Left ventricle myocardium inferior (tissue), 1 donor: ENCODE measurements at regions of chr12 and their contacts with region 1.

Region 1: GRCh38 chr12:6285063-6285477 is 25.4 kb upstream of the PLEKHG6 start:
- DNase-seq: no peak
- H3K4me3 ChIP-seq: no peak overlapping the region
- H3K27ac ChIP-seq: no peak overlapping the region
- H3K4me1 ChIP-seq: peaks cover 13% of the 10 kb centered on the region
- H3K27me3 ChIP-seq: peaks cover 6% of the 10 kb centered on the region
- CTCF ChIP-seq: peak; percentile 95

Region 2: GRCh38 chr12:6167327-6168259 is 117.5 kb before region 1 on chr12:
- intact Hi-C with region 1: no loop called
- DNase-seq: no peak
- H3K4me3 ChIP-seq: no peak overlapping the region
- H3K27ac ChIP-seq: peak overlapping the region; percentile 72
- H3K4me1 ChIP-seq: peaks cover 29% of the 10 kb centered on the region
- H3K27me3 ChIP-seq: no peaks in the 10 kb centered on the region
- CTCF ChIP-seq: no peak

Region 3: DNA sequence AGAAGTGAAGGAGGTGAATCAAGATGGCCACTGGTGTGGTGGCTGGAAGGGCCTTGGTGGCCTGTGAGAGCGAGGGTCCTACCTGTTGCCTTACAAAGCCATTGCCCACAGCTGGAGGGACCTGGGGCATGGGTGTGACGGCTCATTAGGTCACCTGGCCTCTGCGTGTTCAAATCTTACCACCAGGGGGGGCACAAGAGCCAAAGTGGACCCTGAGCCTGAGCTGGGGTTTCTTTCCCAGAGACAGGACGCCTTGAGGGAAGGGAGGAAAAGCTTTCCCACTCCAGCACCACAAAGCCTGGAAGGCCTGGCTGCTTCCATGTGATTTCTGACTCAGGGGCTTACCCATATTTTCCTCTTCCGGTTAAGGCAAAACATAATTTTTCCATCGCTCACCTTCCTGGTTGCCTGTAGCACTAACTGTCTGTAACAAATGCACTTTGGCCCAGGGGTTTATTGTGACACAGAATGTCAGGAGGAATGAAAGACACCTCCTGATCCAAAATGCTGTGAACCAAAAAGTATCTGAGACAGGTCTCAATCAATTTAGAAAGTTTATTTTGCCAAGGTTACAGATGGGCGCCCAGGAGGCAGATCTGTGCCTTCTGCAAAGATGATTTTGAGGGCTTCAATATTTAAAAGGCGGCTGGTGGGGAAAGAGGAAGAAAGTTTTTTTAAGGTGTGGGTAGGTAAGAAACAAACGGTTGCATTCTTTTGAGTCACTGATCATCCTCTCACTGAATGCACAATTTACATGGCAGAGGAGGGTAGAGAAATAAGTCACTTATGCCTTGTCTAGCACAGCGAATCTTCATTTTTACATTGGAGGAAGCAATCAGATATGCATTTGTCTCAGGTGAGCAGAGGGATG is 89.2 kb before region 1 on chr12:
- intact Hi-C with region 1: loop called (anchors 2 kb)
- DNase-seq: peak; percentile 84
- H3K4me3 ChIP-seq: no peak overlapping the region
- H3K27ac ChIP-seq: peak overlapping the region; percentile 67
- H3K4me1 ChIP-seq: peaks cover 28% of the 10 kb centered on the region
- H3K27me3 ChIP-seq: peaks cover 13% of the 10 kb centered on the region
- CTCF ChIP-seq: peak; percentile 95

Region 4: DNA sequence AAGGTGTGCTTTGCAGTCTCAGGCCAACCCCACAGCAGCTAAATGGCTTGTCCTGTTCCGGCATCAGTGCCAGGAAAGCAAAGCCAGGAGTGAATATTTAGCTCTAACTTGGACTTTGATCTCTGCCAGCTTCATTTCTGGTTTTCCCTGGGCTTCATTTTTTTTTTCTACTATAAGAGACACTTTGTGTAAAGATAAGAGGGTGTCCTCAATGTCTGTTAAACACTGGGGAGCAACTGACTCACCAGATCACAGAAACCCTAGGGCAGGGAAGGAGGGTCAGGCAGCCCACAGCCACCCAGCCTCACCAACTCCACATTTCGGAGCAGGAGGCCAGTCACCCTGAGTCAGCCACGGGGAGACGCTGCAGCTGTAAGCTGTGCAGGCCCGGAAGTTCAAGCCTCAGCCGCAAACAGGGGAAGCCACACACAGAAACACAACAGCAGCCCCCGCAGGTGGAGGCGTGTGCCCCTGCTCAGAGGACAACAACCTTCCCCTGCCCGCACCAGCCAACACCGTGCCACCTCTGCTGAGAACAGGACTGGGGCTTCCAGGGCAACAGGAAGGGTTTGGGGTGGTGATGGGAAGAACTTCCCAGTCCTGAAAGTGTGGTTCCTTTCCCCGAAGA is 50.5 kb after region 1 on chr12:
- intact Hi-C with region 1: no loop called
- DNase-seq: peak; percentile 72
- H3K4me3 ChIP-seq: peak overlapping the region; percentile 90
- H3K27ac ChIP-seq: peak overlapping the region; percentile 99
- H3K4me1 ChIP-seq: peaks cover 88% of the 10 kb centered on the region
- H3K27me3 ChIP-seq: no peaks in the 10 kb centered on the region
- CTCF ChIP-seq: peak; percentile 53

Region 5: DNA sequence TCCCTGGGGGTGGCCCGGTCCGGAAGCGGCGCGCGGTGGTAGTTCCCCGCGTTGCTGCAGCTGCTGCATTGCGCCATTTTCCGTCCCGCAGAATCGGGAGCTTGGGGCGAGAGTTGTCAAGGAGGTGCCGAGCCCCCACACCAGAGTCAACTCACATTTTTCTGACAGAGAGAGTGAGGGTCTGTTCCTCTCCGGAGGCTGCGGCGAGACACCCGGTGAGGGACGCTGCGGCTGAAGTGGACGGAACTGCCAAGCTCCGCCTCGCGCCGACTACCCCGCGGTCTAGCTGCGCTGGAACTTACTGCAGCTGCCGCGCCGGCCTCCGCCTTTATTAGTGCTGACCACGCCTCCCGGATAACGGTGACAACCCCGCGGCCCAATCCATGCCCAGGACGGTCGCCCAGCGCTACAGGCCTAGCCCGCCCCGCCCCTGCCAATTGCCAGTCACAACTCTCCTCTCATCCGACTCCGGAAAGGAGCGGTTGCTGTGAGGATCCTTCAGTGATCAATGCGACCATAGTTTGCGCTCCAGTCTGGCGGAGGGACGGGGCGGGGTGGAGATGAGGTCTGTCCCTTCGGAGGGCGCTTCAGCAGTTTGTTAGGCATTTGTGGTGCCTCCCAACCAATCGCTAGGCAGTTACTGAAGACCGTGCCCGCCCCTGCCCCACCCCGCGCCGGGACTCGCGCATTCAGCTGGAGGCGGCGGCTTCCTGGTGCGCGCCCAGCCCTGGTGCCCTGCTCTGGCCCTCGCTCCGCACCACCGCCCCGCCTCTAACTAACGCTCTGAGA is 185.5 kb after region 1 on chr12 and contains the start of gene VAMP1:
- intact Hi-C with region 1: no loop called
- DNase-seq: peak; percentile 98
- H3K4me3 ChIP-seq: peak within 1 kb of the TSS; percentile 81
- H3K27ac ChIP-seq: peak within 1 kb of the TSS; percentile 92
- H3K4me1 ChIP-seq: peaks cover 34% of the 10 kb centered on the region
- H3K27me3 ChIP-seq: no peaks in the 10 kb centered on the region
- CTCF ChIP-seq: peak; percentile 41
- total RNA-seq, gene VAMP1: 4.2 TPM

Region 6: GRCh38 chr12:6553051-6553868 is 268.2 kb after region 1 on chr12:
- intact Hi-C with region 1: no loop called
- DNase-seq: peak; percentile 57
- H3K4me3 ChIP-seq: peak overlapping the region; percentile 95
- H3K27ac ChIP-seq: peak overlapping the region; percentile 94
- H3K4me1 ChIP-seq: peaks cover 94% of the 10 kb centered on the region
- H3K27me3 ChIP-seq: no peaks in the 10 kb centered on the region
- CTCF ChIP-seq: no peak